A673 (cell line): ENCODE measurements at regions of chr3 and their contacts with region 1.

Region 1: GRCh38 chr3:191383124-191383523 is 52.8 kb upstream of the UTS2B start:
- DNase-seq: no peak
- H3K4me3 ChIP-seq: no peak overlapping the region
- H3K27ac ChIP-seq: peak overlapping the region; percentile 45
- H3K4me1 ChIP-seq: peaks cover 19% of the 10 kb centered on the region
- H3K27me3 ChIP-seq: no peaks in the 10 kb centered on the region
- CTCF ChIP-seq: no peak

Region 2: DNA sequence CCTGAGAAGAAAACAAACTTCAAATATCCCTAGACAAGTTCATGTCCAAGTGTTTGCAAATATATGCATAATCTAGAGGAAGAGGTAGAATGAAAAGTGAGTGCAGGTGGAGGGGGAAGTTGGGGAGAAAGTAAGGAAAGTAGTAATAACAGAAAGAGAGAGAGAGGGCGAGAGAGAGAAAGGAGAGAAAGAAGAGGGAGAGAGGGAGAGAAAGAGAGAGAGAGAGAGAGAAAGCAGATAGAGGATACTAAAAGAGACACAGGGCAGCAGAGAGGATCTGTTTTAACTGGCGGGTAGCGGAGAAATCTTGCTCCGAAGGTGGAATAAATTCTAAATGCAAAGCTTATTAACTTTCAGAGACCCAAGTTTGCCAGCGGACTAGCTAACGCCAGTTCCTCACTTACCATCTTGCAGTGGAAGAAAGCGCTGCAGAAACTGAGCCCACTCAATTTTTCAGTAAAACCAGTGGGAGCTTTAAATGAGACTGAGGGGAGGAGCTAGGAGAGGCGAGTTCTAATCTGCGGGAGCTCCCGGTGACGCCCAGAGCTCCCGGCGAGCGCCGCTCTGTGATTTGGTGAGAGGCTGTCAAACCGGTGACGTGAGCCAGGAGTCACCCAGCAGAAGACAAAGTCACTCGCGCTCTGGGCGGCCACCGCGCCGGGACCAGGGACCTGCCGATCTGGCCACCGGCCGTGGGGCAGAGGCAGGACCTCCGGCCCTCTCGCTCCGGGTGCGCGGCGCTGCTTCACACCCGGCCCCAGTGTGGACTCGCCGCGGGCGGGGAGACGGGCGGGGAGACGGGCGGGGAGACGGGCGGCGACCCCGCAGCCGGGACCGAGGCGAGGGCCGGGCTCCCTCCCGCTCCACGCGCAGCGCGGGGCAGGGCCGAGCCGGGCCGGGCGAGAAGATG is 520.7 kb before region 1 on chr3 and contains the start of gene GMNC:
- CTCF ChIA-PET with region 1: no interaction called
- POLR2A ChIA-PET with region 1: no interaction called
- intact Hi-C with region 1: no loop called
- DNase-seq: peak; percentile 93
- H3K4me3 ChIP-seq: peak within 1 kb of the TSS; percentile 75
- H3K27ac ChIP-seq: peak within 1 kb of the TSS; percentile 66
- H3K4me1 ChIP-seq: no peaks in the 10 kb centered on the region
- H3K27me3 ChIP-seq: no peaks in the 10 kb centered on the region
- CTCF ChIP-seq: no peak
- total RNA-seq, gene GMNC: 1.9 and 3.7 TPM in 2 replicates

Region 3: GRCh38 chr3:191329654-191330528 is 53.2 kb before region 1 on chr3 and contains the start of gene UTS2B:
- CTCF ChIA-PET with region 1: no interaction called
- POLR2A ChIA-PET with region 1: no interaction called
- intact Hi-C with region 1: loop called (anchors 5 kb)
- DNase-seq: peak; percentile 69
- H3K4me3 ChIP-seq: peak within 1 kb of the TSS; percentile 93
- H3K27ac ChIP-seq: peak within 1 kb of the TSS; percentile 93
- H3K4me1 ChIP-seq: peaks cover 34% of the 10 kb centered on the region
- H3K27me3 ChIP-seq: no peaks in the 10 kb centered on the region
- CTCF ChIP-seq: no peak
- total RNA-seq, gene UTS2B: 2.4 and 4.7 TPM in 2 replicates

Region 4: DNA sequence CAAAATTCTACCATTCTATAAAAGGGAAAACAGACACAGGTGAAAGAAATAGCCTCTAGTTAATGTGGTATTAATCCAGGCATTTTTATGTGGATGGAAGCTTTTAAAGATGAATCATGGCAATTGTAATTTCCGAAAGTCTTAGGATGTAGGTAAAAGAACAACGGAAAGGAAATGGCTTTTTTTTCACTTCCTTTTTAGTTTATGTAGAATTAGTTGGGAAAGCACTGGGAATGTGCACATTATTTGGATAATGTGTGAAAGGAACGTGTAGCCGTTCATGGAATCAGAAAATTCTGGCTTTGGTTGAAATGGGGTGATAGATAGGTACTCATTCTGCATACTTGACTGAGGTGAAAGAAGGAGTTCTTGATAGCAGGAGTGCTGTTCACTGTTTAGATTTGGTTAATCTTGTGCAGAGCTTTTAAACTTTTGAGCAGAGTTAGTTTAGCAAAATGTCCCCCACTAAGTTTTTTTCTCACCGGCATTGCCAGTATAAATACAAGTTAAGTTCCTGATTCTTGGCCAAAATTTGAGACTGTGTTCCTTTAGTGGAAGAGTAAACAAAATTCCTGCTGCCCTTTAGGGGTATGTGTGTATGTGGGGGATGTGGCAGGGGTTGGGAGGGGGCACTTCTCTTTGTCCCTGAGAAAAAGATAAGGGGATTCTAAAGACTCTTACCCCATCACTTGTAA is 32.6 kb before region 1 on chr3:
- CTCF ChIA-PET with region 1: no interaction called
- POLR2A ChIA-PET with region 1: no interaction called
- intact Hi-C with region 1: no loop called
- DNase-seq: peak; percentile 72
- H3K4me3 ChIP-seq: peak overlapping the region; percentile 9
- H3K27ac ChIP-seq: peak overlapping the region; percentile 52
- H3K4me1 ChIP-seq: peaks cover 58% of the 10 kb centered on the region
- H3K27me3 ChIP-seq: no peaks in the 10 kb centered on the region
- CTCF ChIP-seq: no peak

Region 5: GRCh38 chr3:191397771-191398170 is 14.6 kb after region 1 on chr3:
- CTCF ChIA-PET with region 1: no interaction called
- POLR2A ChIA-PET with region 1: no interaction called
- intact Hi-C with region 1: no loop called
- DNase-seq: no peak
- H3K4me3 ChIP-seq: no peak overlapping the region
- H3K27ac ChIP-seq: no peak overlapping the region
- H3K4me1 ChIP-seq: no peaks in the 10 kb centered on the region
- H3K27me3 ChIP-seq: no peaks in the 10 kb centered on the region
- CTCF ChIP-seq: no peak